Psoas muscle (tissue), 8 donors: ENCODE measurements at regions of chr7 and their contacts with region 1.

Region 1: GRCh38 chr7:74417419-74417971 is 36.2 kb upstream of the GTF2IRD1 start:
- DNase-seq: peak; percentile 68 to 81
- ATAC-seq: peak; percentile 95 to 98 (median 97)
- H3K4me3 ChIP-seq: no peak overlapping the region
- H3K27ac ChIP-seq: no peak overlapping the region
- H3K4me1 ChIP-seq: peaks cover 9% of the 10 kb centered on the region
- H3K27me3 ChIP-seq: no peaks in the 10 kb centered on the region
- CTCF ChIP-seq: peak; percentile 99

Region 2: DNA sequence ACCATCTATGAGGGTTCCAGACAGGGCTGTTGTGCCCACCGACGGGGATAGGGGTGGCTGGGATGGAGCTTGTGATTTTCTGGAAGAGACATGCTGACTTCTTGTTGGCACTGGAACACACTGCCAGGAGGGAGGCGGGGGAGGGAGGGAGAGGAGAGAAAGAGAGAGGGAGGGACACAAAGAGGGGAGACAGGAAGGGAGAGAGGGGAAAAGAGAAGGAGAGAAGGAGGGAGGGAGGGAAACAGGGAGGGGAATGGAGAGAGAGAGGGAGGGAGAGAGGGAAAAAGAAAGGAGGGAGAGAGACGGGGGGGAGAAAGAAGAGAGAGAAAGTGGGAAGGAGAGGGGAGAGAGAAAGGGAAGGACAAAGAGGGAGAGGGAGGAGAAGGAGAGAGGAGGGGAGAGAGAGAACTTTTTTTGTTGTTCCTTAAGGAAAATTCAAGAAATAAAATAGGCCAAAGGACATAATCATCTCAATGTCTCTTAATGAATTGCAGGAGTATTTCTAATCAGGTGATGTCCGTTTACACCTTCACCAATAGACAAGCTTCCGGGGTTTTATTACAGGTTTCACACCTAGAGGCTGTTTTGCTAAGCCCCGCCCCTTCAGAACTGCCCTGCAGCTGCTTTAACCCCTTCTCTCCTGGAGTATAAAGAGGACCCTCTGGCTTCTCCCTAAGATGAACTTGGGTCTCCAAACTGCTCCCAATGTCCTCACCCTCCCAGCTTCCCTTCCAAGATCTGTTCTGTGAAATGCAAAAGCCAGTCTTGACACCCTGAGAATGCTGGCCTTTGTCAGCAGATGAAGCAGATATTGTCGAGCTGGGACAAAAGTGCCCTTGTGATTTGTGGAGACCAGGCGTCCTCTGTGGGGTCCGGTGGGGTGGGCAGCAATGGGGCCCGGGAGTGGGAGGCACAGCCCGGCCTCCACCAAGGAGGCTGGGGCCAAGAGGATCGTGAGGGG is 45.8 kb before region 1 on chr7:
- intact Hi-C with region 1: no loop called
- DNase-seq: no peak
- ATAC-seq: no peak
- H3K4me3 ChIP-seq: no peak overlapping the region
- H3K27ac ChIP-seq: no peak overlapping the region
- H3K4me1 ChIP-seq: no peaks in the 10 kb centered on the region
- H3K27me3 ChIP-seq: peaks cover 0 to 5% (median 1%) of the 10 kb centered on the region in 3 donors
- CTCF ChIP-seq: no peak

Region 3: DNA sequence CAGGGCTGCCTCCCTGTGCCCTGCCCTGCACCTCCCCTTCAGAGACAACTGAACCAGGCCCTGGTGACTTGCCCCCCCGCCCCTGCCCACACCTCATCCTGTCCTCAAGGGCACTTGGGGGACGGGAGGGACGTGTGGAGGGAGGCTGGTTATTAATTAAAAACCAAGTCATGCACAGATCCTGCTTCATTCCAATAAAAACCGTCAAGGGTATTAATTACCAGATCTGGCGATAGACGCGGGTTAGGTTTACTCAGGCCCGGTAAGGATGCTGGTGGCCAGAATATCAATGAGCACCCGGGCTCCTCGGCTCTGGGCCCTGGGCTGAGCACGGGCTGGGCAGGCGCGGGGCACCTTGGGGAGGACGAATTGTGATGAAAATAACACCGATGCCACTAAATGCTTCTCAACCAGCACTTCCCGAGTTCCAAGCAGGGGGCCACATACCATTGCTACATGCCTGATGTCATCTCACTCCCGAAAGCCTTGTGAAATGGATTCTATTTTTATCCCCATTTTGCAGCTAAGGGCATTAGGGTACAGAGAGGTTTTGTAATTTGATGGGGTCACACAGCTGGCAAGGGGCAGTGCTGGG is 11.8 kb after region 1 on chr7:
- intact Hi-C with region 1: loop called in 1 of 2 experiments (anchors 1 kb)
- DNase-seq: no peak
- ATAC-seq: peak in 3 of 4 donors; percentile 66 to 83 (median 70)
- H3K4me3 ChIP-seq: no peak overlapping the region
- H3K27ac ChIP-seq: no peak overlapping the region
- H3K4me1 ChIP-seq: peaks cover 14% of the 10 kb centered on the region
- H3K27me3 ChIP-seq: no peaks in the 10 kb centered on the region
- CTCF ChIP-seq: no peak

Region 4: GRCh38 chr7:74449809-74450397 is 32.4 kb after region 1 on chr7:
- intact Hi-C with region 1: loop called in 1 of 2 experiments (anchors 5 kb)
- DNase-seq: no peak
- ATAC-seq: peak in 2 of 4 donors; percentile 33 to 36
- H3K4me3 ChIP-seq: no peak overlapping the region
- H3K27ac ChIP-seq: no peak overlapping the region
- H3K4me1 ChIP-seq: no peaks in the 10 kb centered on the region
- H3K27me3 ChIP-seq: no peaks in the 10 kb centered on the region
- CTCF ChIP-seq: peak; percentile 70

Region 5: DNA sequence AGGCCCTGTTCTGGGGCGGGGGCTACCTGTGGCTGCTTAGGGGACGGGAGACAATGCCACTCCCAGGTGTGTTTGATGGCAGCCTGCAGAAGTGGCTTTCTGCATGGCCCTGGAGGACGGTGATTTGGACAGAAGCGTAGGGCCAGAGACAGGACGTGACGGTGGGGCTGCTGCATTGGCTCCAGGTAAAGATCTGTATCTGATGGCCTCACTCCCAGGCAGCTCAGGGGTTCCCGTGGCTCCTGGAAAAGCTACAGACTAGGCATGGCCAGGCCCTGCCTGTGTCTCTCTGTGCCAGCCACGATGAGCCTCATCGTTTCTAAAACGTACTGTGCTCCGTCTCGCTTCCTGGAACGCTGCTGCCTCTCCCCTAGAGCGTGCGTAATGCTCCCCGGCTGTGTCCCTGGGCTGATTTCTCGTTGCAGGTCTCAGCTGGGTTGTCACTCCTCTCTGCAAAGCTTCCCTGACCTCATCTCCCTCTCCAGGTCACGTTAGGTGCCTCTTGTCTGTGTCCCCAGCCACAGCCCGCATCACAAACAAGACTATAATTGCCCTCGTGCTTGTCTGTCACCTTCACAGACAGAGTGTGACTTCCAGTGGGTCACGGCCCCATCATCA is 48.8 kb after region 1 on chr7:
- intact Hi-C with region 1: no loop called
- DNase-seq: peak; percentile 79 to 93
- ATAC-seq: peak; percentile 66 to 85 (median 80)
- H3K4me3 ChIP-seq: peak overlapping the region; percentile 6
- H3K27ac ChIP-seq: peak overlapping the region; percentile 93
- H3K4me1 ChIP-seq: peaks cover 65% of the 10 kb centered on the region
- H3K27me3 ChIP-seq: no peaks in the 10 kb centered on the region
- CTCF ChIP-seq: no peak

Region 6: DNA sequence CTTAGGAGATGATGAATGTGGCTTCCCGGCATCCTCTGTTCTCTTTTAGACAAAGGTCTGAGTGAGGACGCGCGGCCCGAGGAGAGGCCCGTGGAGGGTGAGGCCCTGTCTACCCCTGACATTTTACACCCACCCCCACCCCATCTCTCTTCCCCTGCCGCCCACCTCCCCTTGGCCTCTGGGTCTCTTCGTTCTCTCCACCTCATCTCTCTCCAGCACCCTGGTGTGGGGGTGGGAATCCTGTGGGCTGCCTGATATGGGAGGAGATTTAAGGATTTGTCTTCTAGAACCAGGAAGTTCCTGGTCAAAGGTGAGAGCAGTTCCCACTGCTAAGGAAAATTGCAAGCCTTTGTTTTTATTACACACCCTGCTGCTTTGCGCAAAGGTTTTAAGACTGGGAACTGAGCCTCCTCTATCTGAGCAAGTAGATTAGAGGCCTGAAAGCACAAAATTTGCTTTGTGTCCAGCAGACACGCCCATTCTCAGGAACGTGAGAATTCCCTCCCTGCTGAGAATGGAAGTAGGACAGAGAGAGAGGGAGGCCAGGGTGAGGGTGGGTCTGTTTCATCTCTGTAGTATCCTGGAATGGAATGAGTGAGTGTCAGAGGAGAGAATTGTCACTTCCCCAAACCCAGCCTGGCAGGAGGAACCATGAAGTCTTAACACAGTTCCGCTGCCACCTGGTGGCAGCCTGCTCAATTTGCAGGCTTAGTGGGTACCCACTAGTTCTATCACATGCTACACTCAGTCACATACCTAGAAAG is 127.4 kb after region 1 on chr7:
- intact Hi-C with region 1: loop called in 1 of 2 experiments (anchors 10 kb)
- DNase-seq: no peak
- ATAC-seq: peak in 2 of 4 donors; percentile 33 to 43
- H3K4me3 ChIP-seq: no peak overlapping the region
- H3K27ac ChIP-seq: peak overlapping the region; percentile 9
- H3K4me1 ChIP-seq: peaks cover 11% of the 10 kb centered on the region
- H3K27me3 ChIP-seq: no peaks in the 10 kb centered on the region
- CTCF ChIP-seq: peak; percentile 27

Region 7: GRCh38 chr7:74569501-74570075 is 152.1 kb after region 1 on chr7:
- intact Hi-C with region 1: loop called in 1 of 2 experiments (anchors 2 kb)
- DNase-seq: no peak
- ATAC-seq: no peak
- H3K4me3 ChIP-seq: no peak overlapping the region
- H3K27ac ChIP-seq: no peak overlapping the region
- H3K4me1 ChIP-seq: no peaks in the 10 kb centered on the region
- H3K27me3 ChIP-seq: no peaks in the 10 kb centered on the region
- CTCF ChIP-seq: no peak

Region 8: DNA sequence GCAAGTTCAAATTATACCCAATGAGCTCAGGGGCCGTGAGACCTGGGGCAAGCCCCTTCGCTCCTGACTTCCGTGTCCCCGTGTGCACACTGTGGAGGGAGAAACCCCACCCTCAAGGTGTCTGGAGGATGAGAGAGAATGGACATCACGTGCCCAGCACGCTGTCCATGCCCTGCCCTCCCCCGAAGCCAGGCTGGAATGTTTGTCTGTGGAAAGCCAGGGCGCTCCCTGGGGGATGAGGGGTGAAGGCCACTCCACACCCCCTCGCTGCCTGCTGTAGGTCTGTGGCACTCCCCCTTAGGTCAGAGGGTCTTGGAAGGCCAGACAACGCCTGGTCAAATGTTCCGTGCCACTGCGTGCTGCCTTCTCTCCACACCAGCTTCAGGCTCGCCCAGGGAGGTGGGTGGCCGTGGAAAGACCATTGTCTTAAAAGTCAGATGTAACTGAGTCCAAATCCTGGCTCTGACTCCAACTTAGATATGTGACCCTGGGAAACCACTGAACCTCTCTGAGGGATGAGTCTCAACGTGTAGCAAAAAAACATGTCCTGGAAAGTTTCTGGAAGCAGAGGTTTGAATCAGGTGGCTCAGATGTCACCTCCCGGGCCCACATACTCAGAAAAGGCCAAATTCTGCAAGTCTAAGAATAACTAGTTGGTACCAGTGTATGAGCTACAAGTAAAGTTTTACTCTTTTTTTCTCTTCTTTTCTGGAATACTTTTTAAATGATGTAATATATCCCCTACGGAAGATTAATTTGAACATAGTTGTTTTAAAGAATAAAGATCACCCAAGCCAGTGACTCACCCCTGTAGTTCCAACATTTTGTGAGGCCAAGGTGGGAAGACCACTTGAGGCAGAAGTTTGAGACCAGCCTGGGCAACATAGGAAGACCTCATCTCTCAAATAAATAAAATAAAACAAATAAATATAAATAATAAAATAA is 631.2 kb after region 1 on chr7:
- intact Hi-C with region 1: loop called in 1 of 2 experiments (anchors 10 kb)
- DNase-seq: no peak
- ATAC-seq: peak in 1 of 4 donors; percentile 8
- H3K4me3 ChIP-seq: no peak overlapping the region
- H3K27ac ChIP-seq: no peak overlapping the region
- H3K4me1 ChIP-seq: peaks cover 13% of the 10 kb centered on the region
- H3K27me3 ChIP-seq: no peaks in the 10 kb centered on the region
- CTCF ChIP-seq: no peak